PC-9 (cell line): ENCODE measurements at regions of chr6 and their contacts with region 1.

Region 1: DNA sequence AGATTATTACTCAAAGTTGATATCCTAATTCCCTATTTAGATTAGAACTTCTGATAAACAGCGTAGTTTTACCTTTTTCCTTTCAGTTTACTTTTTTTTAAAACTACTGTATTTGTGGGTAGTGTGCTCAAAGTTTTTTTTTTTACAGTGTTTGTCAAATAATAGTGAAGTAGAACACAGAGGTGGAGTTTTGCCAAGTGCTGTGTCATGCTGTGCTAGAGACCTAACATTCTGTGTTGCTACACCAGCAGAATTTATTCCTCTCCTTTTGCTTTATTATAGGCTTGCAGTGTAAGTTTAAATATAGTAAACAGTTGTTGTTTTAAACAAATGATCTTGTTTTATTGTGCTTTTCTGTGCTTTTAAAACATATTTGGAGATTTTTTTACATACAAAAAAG is 125.4 kb downstream of the HIVEP1 start:
- DNase-seq: peak; percentile 44 to 58
- H3K4me3 ChIP-seq: no peak overlapping the region
- H3K27ac ChIP-seq: peak overlapping the region; percentile 60
- H3K4me1 ChIP-seq: peaks cover 18% of the 10 kb centered on the region
- H3K27me3 ChIP-seq: no peaks in the 10 kb centered on the region
- CTCF ChIP-seq: no peak

Region 2: DNA sequence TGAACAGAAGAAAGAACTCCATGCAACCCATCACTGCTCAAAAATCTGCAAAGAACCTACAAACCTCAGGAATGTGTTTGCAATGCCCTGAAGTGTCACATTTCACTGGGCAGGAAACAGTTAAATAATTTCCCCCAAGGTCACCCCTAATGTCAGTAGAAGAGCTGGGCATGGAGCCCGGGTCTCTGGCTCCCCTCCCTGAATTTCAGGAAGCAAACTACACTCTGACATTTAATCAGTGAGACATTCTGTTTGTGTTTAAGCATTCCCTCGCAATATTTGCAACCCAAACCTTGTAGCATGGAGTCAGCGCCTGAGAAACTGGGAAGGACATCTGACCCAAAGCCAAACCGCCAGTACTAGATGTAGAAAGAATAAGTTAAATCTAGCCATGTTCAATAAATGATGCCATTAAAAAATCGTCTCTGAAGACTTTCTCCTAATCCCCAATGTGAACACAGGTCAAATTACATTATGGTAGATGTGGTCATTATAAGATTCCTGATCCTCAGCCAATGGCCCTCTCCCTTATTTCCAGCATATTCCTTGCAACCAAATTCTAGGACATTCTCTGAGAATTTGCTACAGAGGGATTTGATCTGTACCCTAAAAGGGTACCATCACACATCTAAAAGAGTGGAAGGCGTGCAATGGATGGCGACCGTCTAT is 267.7 kb before region 1 on chr6:
- CTCF ChIA-PET with region 1: no interaction called
- POLR2A ChIA-PET with region 1: no interaction called
- intact Hi-C with region 1: loop called (anchors 10 kb)
- DNase-seq: peak in 1 of 2 experiments; percentile 34
- H3K4me3 ChIP-seq: no peak overlapping the region
- H3K27ac ChIP-seq: no peak overlapping the region
- H3K4me1 ChIP-seq: 0 out of 2 replicates have a peak, but pooled peaks cover 9% of the 10 kb centered on the region
- H3K27me3 ChIP-seq: no peaks in the 10 kb centered on the region
- CTCF ChIP-seq: no peak

Region 3: DNA sequence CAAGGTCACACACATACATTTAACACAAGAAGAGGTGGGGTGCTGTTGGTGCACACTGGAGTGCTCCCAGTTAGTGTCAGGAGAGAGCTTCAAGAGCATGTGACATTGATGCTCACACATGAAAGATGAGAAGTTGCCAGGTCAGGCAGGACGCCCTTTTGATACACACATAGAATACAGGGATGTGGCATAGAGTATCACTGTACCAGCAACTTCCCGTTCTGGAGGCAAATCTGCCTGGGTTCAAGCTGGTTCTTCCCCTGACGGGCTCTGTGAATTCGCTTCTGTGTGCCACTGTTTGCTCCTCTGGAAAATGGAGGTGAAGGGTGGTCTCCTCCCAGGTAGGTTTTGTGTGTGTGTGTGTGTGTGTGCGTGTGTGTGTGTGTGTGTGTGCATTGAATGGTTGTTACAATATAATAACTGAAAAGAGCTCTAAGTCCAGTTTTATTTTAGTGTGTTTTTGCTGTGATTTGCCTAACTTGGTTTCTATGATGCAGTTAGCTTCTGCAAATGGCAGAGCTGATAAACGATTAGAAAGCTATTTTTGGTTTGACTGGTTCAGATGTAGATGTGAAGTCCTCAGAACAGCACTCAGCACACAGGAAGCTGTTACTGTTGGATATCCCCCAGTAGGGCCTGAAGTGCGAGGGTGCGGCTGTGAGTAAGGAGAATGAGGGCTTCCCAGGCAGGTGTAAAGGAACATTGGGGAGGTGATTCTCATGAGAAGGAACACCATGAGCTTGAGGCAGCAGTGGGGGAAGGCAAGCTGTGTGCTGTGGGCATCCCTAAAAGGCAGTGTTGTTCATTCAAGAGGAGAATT is 71.9 kb before region 1 on chr6:
- CTCF ChIA-PET with region 1: no interaction called
- POLR2A ChIA-PET with region 1: no interaction called
- intact Hi-C with region 1: no loop called
- DNase-seq: no peak
- H3K4me3 ChIP-seq: no peak overlapping the region
- H3K27ac ChIP-seq: no peak overlapping the region
- H3K4me1 ChIP-seq: no peaks in the 10 kb centered on the region
- H3K27me3 ChIP-seq: no peaks in the 10 kb centered on the region
- CTCF ChIP-seq: no peak

Region 4: DNA sequence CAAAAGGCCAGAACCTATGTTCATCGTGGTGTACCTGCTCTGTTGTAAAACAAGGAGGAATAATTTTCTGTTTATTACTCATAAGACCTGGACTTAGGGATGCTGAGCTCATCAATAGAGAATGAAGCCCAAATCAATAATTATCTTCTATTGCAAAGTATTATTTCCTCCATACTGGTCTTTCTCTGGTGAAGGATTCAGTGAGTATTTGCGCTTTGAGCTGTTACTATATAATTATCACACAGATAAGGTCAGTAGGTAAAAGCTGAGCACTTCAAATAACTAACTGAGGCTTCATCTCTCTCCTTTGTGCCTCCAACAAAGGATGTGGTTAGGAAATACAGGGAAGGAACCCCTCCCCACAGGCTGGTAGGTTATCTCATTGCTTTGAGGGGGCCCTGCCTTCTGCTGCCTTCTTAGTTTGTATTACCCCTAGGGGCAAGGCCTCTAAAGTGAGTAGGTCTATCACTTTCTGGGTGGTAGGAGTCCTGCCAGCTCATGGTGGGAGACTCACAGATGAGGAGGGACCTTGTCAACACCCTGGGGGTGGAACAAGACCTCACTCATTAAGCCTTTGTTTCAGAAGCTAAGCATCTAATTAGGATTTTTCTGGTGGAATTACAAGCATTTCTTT is 187.2 kb after region 1 on chr6:
- CTCF ChIA-PET with region 1: no interaction called
- POLR2A ChIA-PET with region 1: interaction called, 15 read pairs
- intact Hi-C with region 1: no loop called
- DNase-seq: peak; percentile 31 to 56
- H3K4me3 ChIP-seq: peak overlapping the region; percentile 6; the same call in 1 of the 2 replicates
- H3K27ac ChIP-seq: peak overlapping the region; percentile 95
- H3K4me1 ChIP-seq: peaks cover 41% of the 10 kb centered on the region
- H3K27me3 ChIP-seq: no peaks in the 10 kb centered on the region
- CTCF ChIP-seq: no peak